ENCODE measurements at regions of chr18 and their contacts with region 1.

Region 1: DNA sequence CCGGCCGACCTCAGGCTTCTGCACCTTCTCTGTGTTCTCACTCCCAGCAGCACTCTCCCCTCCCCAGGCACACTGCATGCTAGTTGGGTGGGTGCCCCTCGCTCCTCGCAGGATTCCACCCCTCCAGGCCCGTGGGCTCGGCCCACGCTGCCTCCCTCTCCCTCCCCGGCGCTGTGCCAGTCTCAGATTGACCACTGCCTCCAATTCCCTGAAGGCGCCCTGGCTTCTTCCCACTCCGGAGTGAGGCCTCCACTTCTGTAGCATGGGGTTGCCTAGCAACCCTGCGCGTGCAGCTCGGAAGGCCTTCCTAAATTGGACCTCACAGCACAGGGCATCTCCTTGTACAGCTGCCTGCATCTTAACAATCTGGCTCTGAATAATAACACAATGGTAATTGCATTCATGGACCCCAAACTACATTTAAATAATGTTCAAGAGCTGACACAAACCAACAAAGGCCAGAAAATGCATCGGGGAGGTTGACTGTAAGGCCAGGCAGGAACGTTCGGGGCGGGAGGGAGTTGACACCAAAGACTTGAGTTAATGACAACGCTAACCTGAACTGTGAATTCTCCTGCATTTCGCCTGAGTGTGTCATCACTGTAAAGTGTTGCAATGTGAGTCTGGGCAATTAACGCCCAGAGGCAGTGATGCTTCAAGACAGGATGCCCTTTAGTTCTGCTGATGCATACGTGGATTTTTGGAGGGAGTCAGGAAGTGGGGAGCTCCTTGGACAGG is 223.0 kb downstream of the ZBTB7C start:
- DNase-seq: no peak
- ATAC-seq: peak in 6 of 8 donors; percentile 12 to 78 (median 52)
- H3K4me3 ChIP-seq: no peak overlapping the region
- H3K27ac ChIP-seq: no peak overlapping the region
- H3K4me1 ChIP-seq: peaks cover 0 to 13% (median 4%) of the 10 kb centered on the region in 9 donors
- H3K27me3 ChIP-seq: no peaks in the 10 kb centered on the region
- CTCF ChIP-seq: no peak

Region 2: DNA sequence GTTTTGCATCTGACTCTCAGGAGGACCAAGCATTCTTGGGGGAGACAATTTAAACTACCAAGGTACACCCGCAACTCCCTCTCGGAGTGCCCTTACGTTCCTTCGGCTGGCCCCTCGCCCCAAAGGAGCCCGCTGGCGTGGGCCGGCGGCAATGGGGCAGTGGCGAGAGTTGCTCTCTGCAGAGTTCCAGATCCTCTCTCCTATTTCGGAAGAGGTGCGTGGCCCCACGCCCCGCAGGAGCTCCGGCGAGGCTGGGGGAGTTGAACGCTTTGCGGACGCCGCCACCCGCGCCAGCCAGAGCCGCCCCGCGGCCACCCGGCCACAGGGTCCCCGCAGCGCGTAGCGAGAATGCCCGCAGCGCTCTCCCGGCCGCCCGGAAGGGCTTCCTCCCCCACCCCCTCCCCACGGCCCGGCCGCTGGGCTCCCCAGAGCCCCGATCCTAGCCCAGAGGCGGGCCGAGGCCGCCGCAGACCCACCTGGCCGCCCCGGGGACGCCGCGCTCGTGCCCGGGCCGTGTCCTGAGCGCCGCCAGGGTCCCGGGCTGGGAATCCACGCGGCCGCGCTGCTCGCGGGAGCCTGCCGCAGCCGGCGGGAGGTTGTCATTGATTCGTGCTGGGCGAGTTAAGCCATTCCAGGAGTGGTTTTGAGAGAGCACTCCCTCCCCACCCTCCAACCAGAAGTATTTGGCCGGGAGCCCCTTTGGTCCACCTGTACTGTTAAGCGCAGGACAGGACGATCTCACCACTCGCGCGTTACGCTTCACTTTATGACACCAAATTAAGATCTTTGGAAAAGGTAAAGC is 49.5 kb before region 1 on chr18:
- intact Hi-C with region 1: loop called in 1 of 10 experiments (anchors 5 kb)
- DNase-seq: no peak
- ATAC-seq: peak in 7 of 8 donors; percentile 1 to 35 (median 24)
- H3K4me3 ChIP-seq: peak overlapping the region; percentile 51 to 71 (median 60)
- H3K27ac ChIP-seq: peak overlapping the region in 2 of 10 donors; percentile 30 to 43
- H3K4me1 ChIP-seq: peaks cover 9 to 51% (median 27%) of the 10 kb centered on the region in 9 donors
- H3K27me3 ChIP-seq: peaks cover 0 to 48% (median 8%) of the 10 kb centered on the region in 7 donors
- CTCF ChIP-seq: no peak

Region 3: GRCh38 chr18:48230467-48231113 is 44.4 kb after region 1 on chr18:
- intact Hi-C with region 1: no loop called
- DNase-seq: peak; percentile 22 to 37
- ATAC-seq: peak in 6 of 8 donors; percentile 45 to 64 (median 56)
- H3K4me3 ChIP-seq: no peak overlapping the region
- H3K27ac ChIP-seq: no peak overlapping the region
- H3K4me1 ChIP-seq: peaks cover 9 to 39% (median 28%) of the 10 kb centered on the region in 9 donors
- H3K27me3 ChIP-seq: peaks cover 0 to 10% (median 0%) of the 10 kb centered on the region in 7 donors
- CTCF ChIP-seq: peak in 7 of 9 donors; percentile 23 to 60 (median 49)

Measured in heart right ventricle (tissue), 16 donors.